ENCODE measurements at regions of chr1 and their contacts with region 1.

Region 1: GRCh38 chr1:160291248-160292220 is 6.6 kb upstream of the PEX19 start:
- DNase-seq: peak; percentile 78
- ATAC-seq: peak; percentile 90
- H3K4me3 Mint-ChIP-seq: no peak overlapping the region
- H3K27ac Mint-ChIP-seq: no peak overlapping the region
- H3K4me1 Mint-ChIP-seq: no peaks in the 10 kb centered on the region
- H3K27me3 Mint-ChIP-seq: no peaks in the 10 kb centered on the region

Region 2: DNA sequence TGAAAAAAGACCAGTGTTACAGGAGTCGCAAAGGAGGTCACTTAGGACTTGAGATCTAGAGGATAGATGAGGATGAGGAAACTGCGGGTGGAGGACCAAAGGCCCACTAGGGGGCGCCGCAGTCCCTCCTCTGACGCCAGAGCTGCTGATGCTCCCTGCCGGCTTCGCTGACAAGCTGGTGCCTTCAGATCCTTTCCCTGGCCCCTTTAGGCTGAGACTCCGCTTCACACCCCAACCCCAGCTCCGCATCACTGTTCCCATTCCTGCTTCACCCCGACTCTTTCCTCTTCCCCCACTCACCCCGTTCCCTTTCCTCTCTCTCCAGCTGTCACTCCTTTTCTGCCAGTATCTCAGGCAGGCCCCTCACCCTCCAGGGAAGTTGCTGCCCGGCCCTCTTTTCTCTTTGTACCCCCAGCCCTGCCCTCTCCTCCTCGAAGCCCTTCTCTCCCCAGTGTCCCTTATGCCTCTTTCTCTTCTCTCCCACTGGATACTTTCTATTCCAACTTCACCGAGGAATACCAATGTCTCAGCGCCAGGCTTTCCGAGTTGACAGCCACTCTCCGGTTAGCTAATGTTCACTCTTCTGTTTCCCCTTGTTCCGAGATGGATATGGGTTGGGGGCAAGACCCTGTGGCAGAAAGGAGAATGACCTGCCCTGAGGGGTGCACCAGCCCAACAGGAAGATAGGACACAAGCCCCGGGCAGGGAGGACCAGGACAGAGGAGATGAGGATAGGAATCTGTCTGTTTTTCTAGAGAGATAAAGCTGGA is 205.7 kb before region 1 on chr1:
- CTCF ChIA-PET with region 1: interaction called, 12 read pairs
- POLR2A ChIA-PET with region 1: no interaction called
- DNase-seq: peak; percentile 87
- ATAC-seq: peak; percentile 76
- H3K4me3 Mint-ChIP-seq: no peak overlapping the region
- H3K27ac Mint-ChIP-seq: no peak overlapping the region
- H3K4me1 Mint-ChIP-seq: peaks cover 12% of the 10 kb centered on the region
- H3K27me3 Mint-ChIP-seq: peaks cover 20% of the 10 kb centered on the region

Region 3: DNA sequence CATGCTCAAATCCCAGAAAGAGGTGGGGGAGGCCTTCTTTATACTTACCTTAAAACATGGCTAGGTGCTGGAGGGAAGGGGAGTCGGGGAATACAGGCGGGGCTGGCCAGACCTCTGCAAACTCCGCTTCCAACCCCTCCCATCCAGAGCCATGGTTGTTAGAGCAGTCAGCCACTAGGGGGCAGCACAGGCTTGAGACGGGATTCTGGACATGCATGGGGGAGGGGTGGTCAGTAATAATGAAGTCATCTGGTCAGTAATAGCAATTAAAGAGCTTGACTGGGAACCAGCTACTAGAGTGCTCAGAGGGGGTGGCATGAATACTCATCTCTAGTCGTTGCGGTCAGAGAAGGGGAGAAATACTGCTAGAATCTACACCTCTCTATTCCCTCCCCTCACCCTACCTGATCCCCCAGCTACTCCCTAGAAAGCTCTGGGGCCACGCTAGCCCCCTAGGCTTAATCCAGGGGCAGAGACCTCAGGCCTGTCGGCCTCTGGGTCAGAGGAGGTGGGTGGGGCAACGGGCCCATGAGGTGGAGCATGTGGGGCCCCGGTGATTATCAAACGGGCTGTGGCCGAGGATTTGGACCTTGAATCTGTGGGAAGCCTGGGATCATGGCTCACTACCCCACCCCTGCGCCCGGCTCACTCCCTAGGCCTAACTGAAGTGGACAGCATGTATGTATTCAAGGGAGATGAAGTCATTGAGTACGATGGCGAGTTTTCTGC is 98.3 kb before region 1 on chr1:
- CTCF ChIA-PET with region 1: interaction called, 68 read pairs
- POLR2A ChIA-PET with region 1: no interaction called
- DNase-seq: peak; percentile 86
- ATAC-seq: peak; percentile 69
- H3K4me3 Mint-ChIP-seq: no peak overlapping the region
- H3K27ac Mint-ChIP-seq: no peak overlapping the region
- H3K4me1 Mint-ChIP-seq: no peaks in the 10 kb centered on the region
- H3K27me3 Mint-ChIP-seq: peaks cover 4% of the 10 kb centered on the region

Region 4: DNA sequence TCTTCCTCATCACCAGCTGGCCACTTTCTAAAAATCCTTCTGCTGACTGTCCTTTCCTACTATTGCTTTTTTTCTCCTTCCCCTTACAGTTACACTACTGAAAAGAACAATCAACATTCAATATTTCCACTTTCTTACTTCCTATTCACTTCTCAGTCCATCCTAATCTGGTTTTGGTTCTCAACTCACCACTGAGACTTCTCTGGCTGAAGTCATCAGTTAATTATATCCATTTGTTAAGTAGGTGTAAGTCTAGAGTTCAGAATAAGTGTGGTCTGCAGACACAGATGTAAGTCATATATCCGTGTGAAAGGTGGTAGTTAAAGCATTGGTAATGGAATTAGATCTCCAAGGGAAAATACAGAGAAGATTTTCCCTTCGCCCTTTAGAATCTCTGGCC is 64.9 kb before region 1 on chr1:
- CTCF ChIA-PET with region 1: interaction called, 27 read pairs
- POLR2A ChIA-PET with region 1: no interaction called
- DNase-seq: no peak
- ATAC-seq: no peak
- H3K4me3 Mint-ChIP-seq: no peak overlapping the region
- H3K27ac Mint-ChIP-seq: no peak overlapping the region
- H3K4me1 Mint-ChIP-seq: no peaks in the 10 kb centered on the region
- H3K27me3 Mint-ChIP-seq: no peaks in the 10 kb centered on the region

Region 5: GRCh38 chr1:160251687-160252526 is 39.6 kb before region 1 on chr1:
- CTCF ChIA-PET with region 1: interaction called, 46 read pairs
- POLR2A ChIA-PET with region 1: interaction called, 4 read pairs
- DNase-seq: peak; percentile 72
- ATAC-seq: peak; percentile 89
- H3K4me3 Mint-ChIP-seq: no peak overlapping the region
- H3K27ac Mint-ChIP-seq: no peak overlapping the region
- H3K4me1 Mint-ChIP-seq: peaks cover 2% of the 10 kb centered on the region
- H3K27me3 Mint-ChIP-seq: no peaks in the 10 kb centered on the region

Region 6: DNA sequence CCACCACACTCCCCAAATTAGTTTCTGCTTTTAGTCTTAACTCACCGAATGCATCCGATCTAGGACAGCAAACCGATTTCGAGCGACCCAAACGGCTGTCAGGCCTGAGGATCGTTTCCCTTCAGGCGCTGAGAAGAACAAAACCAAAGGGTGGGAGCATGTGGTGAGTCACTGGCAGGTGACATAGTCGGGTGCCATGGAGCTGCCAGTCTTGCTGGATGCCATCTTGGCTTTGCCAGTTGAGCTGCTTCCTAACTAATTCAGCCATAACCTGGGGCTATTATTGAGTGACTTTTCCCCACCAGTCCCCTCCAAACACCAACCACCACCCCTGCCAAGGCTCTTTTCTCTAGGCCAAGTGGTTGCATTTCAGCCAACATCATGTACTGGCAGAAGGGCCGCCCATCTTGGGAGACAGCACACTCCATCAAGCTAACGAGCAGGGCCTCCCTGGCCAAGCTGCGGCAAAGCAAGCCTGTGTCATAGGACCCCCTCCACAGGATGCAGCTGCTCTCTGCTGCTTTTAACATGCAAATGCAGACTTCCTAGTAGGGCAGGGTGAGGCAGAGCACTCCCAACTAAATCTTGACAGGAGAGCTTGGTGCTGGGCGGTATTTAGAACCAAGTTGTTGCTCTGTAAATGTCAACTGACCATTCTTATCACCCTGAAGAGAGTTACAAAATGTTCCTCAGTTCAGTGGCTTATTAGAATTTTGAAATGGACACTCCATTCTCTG is 15.8 kb after region 1 on chr1:
- CTCF ChIA-PET with region 1: interaction called, 25 read pairs
- POLR2A ChIA-PET with region 1: interaction called, 3 read pairs
- DNase-seq: no peak
- ATAC-seq: no peak
- H3K4me3 Mint-ChIP-seq: no peak overlapping the region
- H3K27ac Mint-ChIP-seq: no peak overlapping the region
- H3K4me1 Mint-ChIP-seq: no peaks in the 10 kb centered on the region
- H3K27me3 Mint-ChIP-seq: no peaks in the 10 kb centered on the region

Region 7: DNA sequence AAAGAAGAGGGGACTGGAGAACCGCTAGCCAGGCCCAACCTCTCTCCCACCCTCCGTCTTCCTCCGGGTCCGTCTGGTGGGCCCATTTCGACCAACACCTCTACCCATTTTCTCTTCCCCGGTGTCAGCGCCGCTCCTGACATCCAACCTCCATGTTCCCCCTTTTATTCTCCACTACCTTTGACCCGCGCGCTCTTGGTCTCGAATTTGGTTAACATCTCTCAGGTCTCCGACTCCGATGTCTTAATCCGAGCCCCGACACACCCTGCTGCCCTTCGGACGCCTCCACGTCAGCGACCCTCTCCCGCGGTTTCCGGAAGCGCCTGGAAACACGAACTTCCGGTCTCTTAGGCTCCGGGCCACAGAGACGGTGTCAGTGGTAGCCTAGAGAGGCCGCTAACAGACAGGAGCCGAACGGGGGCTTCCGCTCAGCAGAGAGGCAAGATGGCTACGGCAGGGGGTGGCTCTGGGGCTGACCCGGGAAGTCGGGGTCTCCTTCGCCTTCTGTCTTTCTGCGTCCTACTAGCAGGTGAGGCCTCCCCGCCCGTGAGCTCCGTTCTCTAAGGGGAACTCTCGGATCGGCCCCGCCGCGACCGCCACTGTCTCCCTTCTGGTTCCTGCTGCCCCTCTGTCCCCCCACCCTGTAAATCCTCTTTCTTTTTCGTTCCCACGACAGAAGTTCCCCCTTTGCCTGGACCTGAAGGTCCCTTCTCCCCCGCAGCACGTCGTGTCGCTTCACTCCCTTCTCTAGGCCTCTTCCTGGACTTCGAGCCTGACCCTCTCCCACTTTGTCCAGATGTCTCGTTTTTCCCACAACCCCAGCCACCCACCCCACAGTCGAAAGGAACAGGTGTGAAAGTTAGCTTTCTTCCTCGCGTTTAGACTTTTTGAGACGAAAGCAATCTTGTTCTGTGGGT is 51.7 kb after region 1 on chr1 and contains the starts of genes COPA and NCSTN:
- CTCF ChIA-PET with region 1: interaction called, 15 read pairs
- POLR2A ChIA-PET with region 1: no interaction called
- DNase-seq: peak; percentile 95
- ATAC-seq: peak; percentile 98
- H3K4me3 Mint-ChIP-seq: peak within 1 kb of the TSS; percentile 100
- H3K27ac Mint-ChIP-seq: peak within 1 kb of the TSS; percentile 100
- H3K4me1 Mint-ChIP-seq: peaks cover 58% of the 10 kb centered on the region
- H3K27me3 Mint-ChIP-seq: no peaks in the 10 kb centered on the region
- total RNA-seq, gene COPA: 121 to 128 TPM
- total RNA-seq, gene NCSTN: 52.7 to 59.7 TPM

Region 8: GRCh38 chr1:160494620-160495019 is 203.1 kb after region 1 on chr1:
- CTCF ChIA-PET with region 1: no interaction called
- POLR2A ChIA-PET with region 1: no interaction called
- DNase-seq: no peak
- ATAC-seq: no peak
- H3K4me3 Mint-ChIP-seq: no peak overlapping the region
- H3K27ac Mint-ChIP-seq: no peak overlapping the region
- H3K4me1 Mint-ChIP-seq: no peaks in the 10 kb centered on the region
- H3K27me3 Mint-ChIP-seq: no peaks in the 10 kb centered on the region

Measured in activated CD8-positive, alpha-beta T cell treated with anti-CD3 and anti-CD28 coated beads, Interleukin-2, amount 10 ng/mL, durations not matched to agents 7 days and 5 days (primary cell).